ENCODE measurements at regions of chr16 and their contacts with region 1.

Region 1: DNA sequence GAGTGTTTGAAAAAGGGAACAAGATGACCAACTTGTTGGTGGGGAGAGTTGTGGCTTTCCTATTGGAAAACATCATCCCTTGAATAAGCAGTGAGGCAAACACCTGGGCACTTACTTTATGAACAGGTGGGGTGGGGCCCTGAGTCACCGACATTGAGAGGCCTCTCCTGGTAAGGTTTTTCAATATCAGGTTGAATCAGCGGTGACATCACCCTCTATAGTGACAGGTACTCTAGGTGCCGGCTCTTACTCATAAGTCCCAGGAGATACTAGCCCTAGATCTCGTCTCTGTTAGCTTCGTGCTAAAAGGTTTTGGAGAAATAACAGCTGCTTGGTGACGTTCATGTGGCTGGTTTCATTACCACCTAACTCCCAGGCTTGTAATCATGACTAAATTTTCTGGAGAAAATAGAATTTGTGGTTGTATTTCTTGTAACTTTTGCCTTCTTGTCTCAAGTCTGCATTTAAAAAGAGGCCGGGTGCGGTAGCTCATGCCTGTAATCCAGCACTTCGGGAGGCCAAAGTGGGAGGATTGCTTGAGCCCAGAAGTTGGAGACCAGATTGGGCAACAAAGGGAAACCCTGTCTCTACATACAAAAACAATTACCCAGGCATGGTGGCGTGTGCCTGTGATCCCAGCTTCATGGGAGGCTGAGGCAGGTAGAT is 19.3 kb downstream of the CDH1 start:
- DNase-seq: peak; percentile 55
- H3K4me3 Mint-ChIP-seq: peak overlapping the region; percentile 9
- H3K27ac Mint-ChIP-seq: peak overlapping the region; percentile 89
- H3K4me1 Mint-ChIP-seq: peaks cover 63% of the 10 kb centered on the region
- H3K27me3 Mint-ChIP-seq: no peaks in the 10 kb centered on the region

Region 2: GRCh38 chr16:68719993-68720489 is 36.3 kb before region 1 on chr16:
- intact Hi-C with region 1: loop called (anchors 1 kb)
- DNase-seq: no peak
- H3K4me3 Mint-ChIP-seq: no peak overlapping the region
- H3K27ac Mint-ChIP-seq: no peak overlapping the region
- H3K4me1 Mint-ChIP-seq: peaks cover 5% of the 10 kb centered on the region
- H3K27me3 Mint-ChIP-seq: no peaks in the 10 kb centered on the region

Region 3: DNA sequence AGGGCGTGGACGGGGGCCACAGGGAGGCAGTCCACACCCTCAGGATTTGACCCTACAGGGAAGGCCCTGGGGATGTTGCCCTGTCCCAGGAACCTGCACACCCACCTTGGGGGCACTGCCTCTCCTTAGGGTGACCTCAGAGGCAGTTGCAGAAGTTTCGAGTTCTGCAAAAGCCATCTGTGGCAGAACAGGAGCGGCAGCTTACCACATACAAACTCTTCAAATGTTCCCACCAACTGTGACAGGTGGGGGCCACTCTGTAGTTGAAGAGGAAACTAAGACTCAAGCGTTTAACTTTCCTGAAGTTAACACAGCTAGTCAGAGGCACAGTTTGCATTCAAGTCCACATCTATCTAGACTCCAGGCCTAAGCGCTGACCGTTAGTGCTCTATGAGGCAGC is 25.8 kb after region 1 on chr16:
- intact Hi-C with region 1: loop called (anchors 1 kb)
- DNase-seq: no peak
- H3K4me3 Mint-ChIP-seq: no peak overlapping the region
- H3K27ac Mint-ChIP-seq: no peak overlapping the region
- H3K4me1 Mint-ChIP-seq: peaks cover 7% of the 10 kb centered on the region
- H3K27me3 Mint-ChIP-seq: peaks cover 47% of the 10 kb centered on the region

Region 4: GRCh38 chr16:69089091-69089910 is 332.9 kb after region 1 on chr16:
- intact Hi-C with region 1: no loop called
- DNase-seq: peak; percentile 33
- H3K4me3 Mint-ChIP-seq: no peak overlapping the region
- H3K27ac Mint-ChIP-seq: no peak overlapping the region
- H3K4me1 Mint-ChIP-seq: peaks cover 24% of the 10 kb centered on the region
- H3K27me3 Mint-ChIP-seq: peaks cover 4% of the 10 kb centered on the region

Region 5: DNA sequence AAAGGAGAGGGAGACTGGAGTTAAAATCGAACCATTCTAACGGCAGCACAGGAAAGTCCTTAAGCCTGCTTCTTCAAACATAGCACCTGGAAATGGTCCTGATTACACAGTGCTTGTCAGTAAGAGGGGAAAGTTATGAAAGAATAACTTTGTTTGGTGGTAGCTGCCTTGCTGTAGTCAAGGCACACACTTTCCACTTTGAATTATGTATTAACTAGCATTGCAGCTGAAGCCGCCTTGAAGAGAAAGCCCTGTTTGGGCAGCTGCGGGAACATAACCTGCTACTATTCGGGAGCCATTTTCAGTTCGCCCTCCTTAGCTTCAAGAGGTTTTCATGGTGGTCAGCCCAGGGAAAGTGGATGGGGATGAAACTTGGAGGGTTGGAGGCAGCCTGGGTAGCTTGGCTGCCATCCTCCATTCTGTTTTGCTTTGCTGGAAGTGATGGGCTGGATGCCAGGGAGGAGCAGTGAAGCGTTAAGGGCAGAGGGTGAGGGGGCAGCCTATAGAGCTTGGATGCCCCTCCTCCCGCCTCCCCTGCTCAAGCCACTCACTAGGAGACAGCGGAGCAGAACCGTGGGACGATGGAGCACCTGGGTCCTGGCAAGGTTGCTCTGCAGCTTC is 343.8 kb after region 1 on chr16:
- intact Hi-C with region 1: no loop called
- DNase-seq: no peak
- H3K4me3 Mint-ChIP-seq: no peak overlapping the region
- H3K27ac Mint-ChIP-seq: no peak overlapping the region
- H3K4me1 Mint-ChIP-seq: peaks cover under 1% of the 10 kb centered on the region
- H3K27me3 Mint-ChIP-seq: peaks cover 15% of the 10 kb centered on the region

Measured in activated T-helper 2 cell treated with anti-CD3 and anti-CD28 coated beads, Interferon-gamma antibody, Interleukin-2, Interleukin-4, amounts not matched to agents 10 μg/mL and 5 μg/mL and 100 μg/mL, durations not matched to agents 14 hours and 24 hours and 36 hours (primary cell).